A549 (cell line): ENCODE measurements at regions of chr7 and their contacts with region 1.

Region 1: DNA sequence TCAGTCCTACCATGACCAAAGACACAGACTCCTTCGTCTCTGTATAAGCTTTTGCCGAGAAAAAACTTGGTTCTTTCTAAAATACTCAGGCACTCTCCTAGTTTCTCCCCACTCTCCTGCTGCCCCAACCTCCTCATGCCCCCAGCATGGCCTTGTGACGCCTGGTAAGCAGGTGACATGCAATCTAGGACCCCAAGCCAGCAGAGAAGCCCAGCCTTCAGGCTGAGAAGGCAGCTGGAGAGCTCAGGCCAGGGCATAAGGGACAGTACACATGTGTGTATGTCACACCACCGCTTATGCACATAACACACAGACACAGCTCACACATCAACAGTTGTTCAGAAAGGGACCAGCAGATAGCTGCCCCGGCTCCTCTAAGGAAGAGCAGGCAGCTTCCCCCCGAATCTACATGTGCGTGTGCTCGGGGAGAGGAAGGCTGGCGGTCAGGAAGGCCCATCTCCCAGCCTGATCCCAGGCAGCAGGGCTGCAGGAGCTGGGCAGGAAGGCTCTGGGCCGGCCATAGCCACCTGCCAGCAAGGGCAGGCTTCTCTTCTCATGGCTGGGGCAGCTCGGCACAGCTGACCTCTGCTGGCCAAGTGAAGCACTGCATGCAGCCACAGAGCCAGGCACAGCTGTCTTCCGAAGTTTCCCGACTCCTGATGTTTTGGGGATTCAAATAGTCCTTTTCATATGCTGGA is 8.5 kb downstream of the DDX56 start:
- DNase-seq: peak; percentile 59 to 63
- ATAC-seq: peak; percentile 76 to 83
- H3K4me3 ChIP-seq: no peak overlapping the region
- H3K27ac ChIP-seq: no peak overlapping the region
- H3K4me1 ChIP-seq: peaks cover 25% of the 10 kb centered on the region
- CTCF ChIP-seq: peak; percentile 81
- EP300 ChIP-seq: no peak
- POLR2A ChIP-seq: no peak
- RAD21 ChIP-seq: peak; percentile 70 to 74

Region 2: GRCh38 chr7:44348300-44348699 is 216.9 kb before region 1 on chr7:
- CTCF ChIA-PET with region 1: interaction called, 12 read pairs
- POLR2A ChIA-PET with region 1: no interaction called
- DNase-seq: peak; percentile 28 to 47
- ATAC-seq: peak; percentile 56 to 88; a peak in 5 of 6 replicates
- H3K4me3 ChIP-seq: no peak overlapping the region
- H3K27ac ChIP-seq: no peak overlapping the region
- H3K4me1 ChIP-seq: no peaks in the 10 kb centered on the region
- CTCF ChIP-seq: peak; percentile 16; the same call in 1 of the 3 replicates
- EP300 ChIP-seq: no peak
- POLR2A ChIP-seq: no peak
- RAD21 ChIP-seq: peak; percentile 37 to 61; a peak in 4 of 5 replicates

Region 3: GRCh38 chr7:44449584-44449928 is 115.7 kb before region 1 on chr7:
- CTCF ChIA-PET with region 1: no interaction called
- POLR2A ChIA-PET with region 1: no interaction called
- DNase-seq: no peak
- ATAC-seq: no peak
- H3K4me3 ChIP-seq: no peak overlapping the region
- H3K27ac ChIP-seq: no peak overlapping the region
- H3K4me1 ChIP-seq: no peaks in the 10 kb centered on the region
- CTCF ChIP-seq: no peak
- EP300 ChIP-seq: no peak
- POLR2A ChIP-seq: no peak
- RAD21 ChIP-seq: no peak

Region 4: GRCh38 chr7:44490351-44491200 is 74.7 kb before region 1 on chr7 and contains the start of gene NUDCD3:
- CTCF ChIA-PET with region 1: interaction called, 17 read pairs
- POLR2A ChIA-PET with region 1: interaction called, 8 read pairs
- DNase-seq: peak; percentile 89 to 91
- ATAC-seq: peak; percentile 99
- H3K4me3 ChIP-seq: peak within 1 kb of the TSS; percentile 88
- H3K27ac ChIP-seq: peak within 1 kb of the TSS; percentile 93 to 98
- H3K4me1 ChIP-seq: peaks cover 13% of the 10 kb centered on the region
- CTCF ChIP-seq: peak; percentile 25; the same call in 2 of the 3 replicates
- EP300 ChIP-seq: no peak
- POLR2A ChIP-seq: peak; percentile 84
- RAD21 ChIP-seq: peak in 1 of 2 experiments; percentile 8; a peak in 1 of 5 replicates
- polyA plus RNA-seq, gene NUDCD3: 66.3 and 84.2 TPM in 2 replicates

Region 5: GRCh38 chr7:44541028-44541869 is 24.0 kb before region 1 on chr7 and contains the start of gene NPC1L1:
- CTCF ChIA-PET with region 1: interaction called, 30 read pairs
- POLR2A ChIA-PET with region 1: interaction called, 3 read pairs
- DNase-seq: no peak
- ATAC-seq: no peak
- H3K4me3 ChIP-seq: no peak within 1 kb of the TSS
- H3K27ac ChIP-seq: peak within 1 kb of the TSS in 1 of 2 experiments; percentile 24; a peak in 1 of 6 replicates
- H3K4me1 ChIP-seq: peaks cover 18% of the 10 kb centered on the region
- CTCF ChIP-seq: no peak
- EP300 ChIP-seq: no peak
- POLR2A ChIP-seq: no peak
- RAD21 ChIP-seq: no peak
- polyA plus RNA-seq, gene NPC1L1: 0.06 and 0.12 TPM in 2 replicates

Region 6: GRCh38 chr7:44547536-44548231 is 17.6 kb before region 1 on chr7:
- CTCF ChIA-PET with region 1: interaction called, 30 read pairs
- POLR2A ChIA-PET with region 1: interaction called, 3 read pairs
- DNase-seq: no peak
- ATAC-seq: no peak; a peak in 2 of 6 replicates
- H3K4me3 ChIP-seq: no peak overlapping the region
- H3K27ac ChIP-seq: no peak overlapping the region
- H3K4me1 ChIP-seq: peaks cover 21% of the 10 kb centered on the region
- CTCF ChIP-seq: no peak
- EP300 ChIP-seq: no peak
- POLR2A ChIP-seq: no peak
- RAD21 ChIP-seq: no peak

Region 7: GRCh38 chr7:44581879-44582603 is 16.8 kb after region 1 on chr7 and contains the start of gene TMED4:
- CTCF ChIA-PET with region 1: interaction called, 18 read pairs
- POLR2A ChIA-PET with region 1: interaction called, 5 read pairs
- DNase-seq: peak; percentile 98 to 99
- ATAC-seq: peak; percentile 94
- H3K4me3 ChIP-seq: peak within 1 kb of the TSS; percentile 94
- H3K27ac ChIP-seq: peak within 1 kb of the TSS; percentile 94 to 95
- H3K4me1 ChIP-seq: peaks cover 16% of the 10 kb centered on the region
- CTCF ChIP-seq: no peak
- EP300 ChIP-seq: no peak
- POLR2A ChIP-seq: peak; percentile 93
- RAD21 ChIP-seq: no peak
- polyA plus RNA-seq, gene TMED4: 68.3 and 79.2 TPM in 2 replicates